Left ventricle myocardium inferior (tissue), 1 donor: ENCODE measurements at regions of chr5 and their contacts with region 1.

Region 1: DNA sequence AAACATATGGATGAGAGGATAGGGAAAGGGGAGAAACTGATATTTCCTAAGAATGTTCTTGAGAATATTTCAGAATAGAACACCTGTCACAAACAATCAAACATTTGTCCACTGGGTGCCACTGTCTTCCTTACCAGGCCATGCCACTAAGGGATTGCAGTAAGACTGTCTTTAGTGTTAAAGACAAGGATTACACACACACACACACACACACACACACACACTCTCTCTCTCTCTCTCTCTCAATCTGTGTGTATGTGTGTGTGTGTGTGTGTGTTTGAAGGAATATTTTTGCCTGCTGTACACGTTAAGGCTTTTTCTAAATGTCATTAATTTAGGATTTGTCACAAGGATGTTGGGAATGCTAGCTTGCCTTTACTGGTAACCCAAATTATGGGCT is 54.4 kb downstream of the CCDC192 start:
- DNase-seq: no peak
- H3K4me3 ChIP-seq: no peak overlapping the region
- H3K27ac ChIP-seq: no peak overlapping the region
- H3K4me1 ChIP-seq: peaks cover 12% of the 10 kb centered on the region
- H3K27me3 ChIP-seq: no peaks in the 10 kb centered on the region
- CTCF ChIP-seq: peak; percentile 65

Region 2: DNA sequence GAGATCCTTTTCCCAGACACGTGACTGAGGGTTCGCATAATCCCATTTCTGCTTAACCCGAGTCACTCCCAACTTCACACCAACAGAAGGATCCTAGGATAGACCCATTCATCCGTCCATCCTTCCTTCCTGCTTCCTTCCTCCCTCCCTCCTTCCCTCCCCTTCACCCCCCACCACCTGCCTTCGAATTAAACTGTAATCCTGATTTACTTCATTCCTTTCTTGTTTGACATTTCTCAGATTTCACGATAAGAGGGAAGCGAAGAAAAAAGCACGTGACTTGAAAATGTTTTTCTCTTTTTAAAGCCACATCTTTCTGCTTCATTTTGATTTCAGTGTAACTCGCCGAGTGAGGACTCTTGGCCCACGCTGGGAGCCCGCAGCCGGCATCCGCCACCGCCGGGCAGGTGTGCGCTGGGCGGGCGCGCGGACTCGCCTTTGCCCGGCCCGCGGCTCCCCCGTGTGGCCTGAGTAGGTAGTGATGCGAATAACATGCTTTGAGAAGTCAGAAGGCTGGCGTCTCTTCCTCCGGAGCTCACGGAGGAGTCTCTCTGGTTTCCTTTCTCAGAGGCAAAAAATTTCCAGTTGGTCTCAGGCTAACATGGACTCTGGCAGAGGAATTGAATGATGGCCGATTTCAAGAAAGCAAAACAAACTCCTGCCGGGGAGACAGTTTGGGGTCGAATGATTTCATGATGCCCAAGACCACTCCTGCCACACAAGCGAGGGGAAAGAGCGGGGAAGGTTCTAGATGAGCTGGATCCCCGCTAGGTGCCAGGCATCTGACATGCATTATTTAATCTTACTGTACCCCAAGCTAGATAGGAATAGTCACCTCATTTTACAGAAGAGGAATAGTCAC is 443.7 kb after region 1 on chr5:
- intact Hi-C with region 1: loop called (anchors 10 kb)
- DNase-seq: peak; percentile 74
- H3K4me3 ChIP-seq: peak overlapping the region; percentile 42
- H3K27ac ChIP-seq: no peak overlapping the region
- H3K4me1 ChIP-seq: peaks cover 16% of the 10 kb centered on the region
- H3K27me3 ChIP-seq: no peaks in the 10 kb centered on the region
- CTCF ChIP-seq: peak; percentile 92